ENCODE measurements at regions of chr6 and their contacts with region 1.

Region 1: DNA sequence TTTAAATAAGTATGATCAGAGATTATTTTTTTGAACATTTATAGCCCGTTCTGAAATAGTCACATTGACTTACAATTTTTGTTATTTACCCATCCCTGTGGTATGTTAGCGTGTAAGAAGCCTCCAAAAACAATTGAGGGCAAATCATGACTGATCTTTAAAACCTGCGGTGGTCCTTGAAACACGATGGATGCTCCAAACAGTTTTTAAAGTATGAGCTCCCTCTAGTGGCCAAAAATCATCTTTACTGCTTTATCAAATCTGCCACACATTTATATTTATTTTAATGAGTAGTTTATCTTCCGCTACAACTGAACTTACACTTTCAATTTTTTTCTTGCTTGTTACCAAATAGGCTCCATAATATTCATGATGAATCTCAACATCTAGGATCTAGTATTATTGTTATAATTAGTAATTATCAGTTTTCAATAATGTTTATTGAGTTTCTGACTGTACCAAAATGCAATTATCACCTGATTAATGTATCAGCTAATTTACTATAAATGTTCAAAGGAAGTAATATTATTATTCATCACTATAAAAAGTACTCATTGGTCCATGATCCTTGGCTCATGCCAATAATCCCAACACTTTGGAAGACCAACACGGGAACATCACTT is 52.2 kb downstream of the MARCKS start:
- DNase-seq: peak in 1 of 2 donors; percentile 85
- H3K4me3 ChIP-seq: no peak overlapping the region
- H3K27ac ChIP-seq: no peak overlapping the region
- H3K4me1 ChIP-seq: peaks cover 0 to 4% (median 3%) of the 10 kb centered on the region in 4 donors
- H3K27me3 ChIP-seq: no peaks in the 10 kb centered on the region
- CTCF ChIP-seq: peak in 5 of 7 experiments; percentile 51 to 84 (median 53)
- EP300 ChIP-seq: no peak
- POLR2A ChIP-seq: no peak

Region 2: DNA sequence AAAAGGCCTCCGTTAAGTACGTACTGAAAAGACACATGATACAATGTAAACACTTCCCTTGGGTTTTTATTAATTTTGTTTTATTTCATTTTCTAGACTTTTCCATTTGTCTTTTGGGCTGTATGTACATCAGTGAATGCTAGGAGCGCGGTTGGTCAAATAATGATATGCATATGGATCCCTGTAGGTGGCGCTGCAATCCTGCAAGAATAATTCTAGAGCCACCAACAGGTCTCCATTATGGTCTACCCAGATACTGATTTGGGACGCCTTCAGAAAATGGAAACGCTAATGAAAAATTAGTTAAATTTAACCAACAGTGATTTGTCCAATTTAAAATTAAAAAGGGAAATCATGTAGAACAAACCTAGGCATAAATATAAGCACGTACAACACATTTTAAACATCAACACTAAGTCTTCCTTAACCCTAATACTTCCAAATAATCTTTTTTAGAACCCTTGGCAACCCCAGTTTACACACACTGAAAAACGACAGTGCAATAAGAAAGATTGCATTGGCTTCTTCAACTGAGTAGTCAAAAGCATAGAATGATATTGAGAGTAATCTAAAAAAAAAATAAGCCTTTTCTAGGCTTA is 1128.7 kb before region 1 on chr6:
- intact Hi-C with region 1: loop called (anchors 10 kb)
- DNase-seq: peak; percentile 73 to 91
- H3K4me3 ChIP-seq: no peak overlapping the region
- H3K27ac ChIP-seq: no peak overlapping the region
- H3K4me1 ChIP-seq: no peaks in the 10 kb centered on the region
- H3K27me3 ChIP-seq: no peaks in the 10 kb centered on the region
- CTCF ChIP-seq: peak in 5 of 7 experiments; percentile 69 to 84 (median 79)
- EP300 ChIP-seq: no peak
- POLR2A ChIP-seq: no peak

Measured in stomach (tissue), 19 donors.